HepG2 (cell line): ENCODE measurements at regions of chr1 and their contacts with region 1.

Region 1: DNA sequence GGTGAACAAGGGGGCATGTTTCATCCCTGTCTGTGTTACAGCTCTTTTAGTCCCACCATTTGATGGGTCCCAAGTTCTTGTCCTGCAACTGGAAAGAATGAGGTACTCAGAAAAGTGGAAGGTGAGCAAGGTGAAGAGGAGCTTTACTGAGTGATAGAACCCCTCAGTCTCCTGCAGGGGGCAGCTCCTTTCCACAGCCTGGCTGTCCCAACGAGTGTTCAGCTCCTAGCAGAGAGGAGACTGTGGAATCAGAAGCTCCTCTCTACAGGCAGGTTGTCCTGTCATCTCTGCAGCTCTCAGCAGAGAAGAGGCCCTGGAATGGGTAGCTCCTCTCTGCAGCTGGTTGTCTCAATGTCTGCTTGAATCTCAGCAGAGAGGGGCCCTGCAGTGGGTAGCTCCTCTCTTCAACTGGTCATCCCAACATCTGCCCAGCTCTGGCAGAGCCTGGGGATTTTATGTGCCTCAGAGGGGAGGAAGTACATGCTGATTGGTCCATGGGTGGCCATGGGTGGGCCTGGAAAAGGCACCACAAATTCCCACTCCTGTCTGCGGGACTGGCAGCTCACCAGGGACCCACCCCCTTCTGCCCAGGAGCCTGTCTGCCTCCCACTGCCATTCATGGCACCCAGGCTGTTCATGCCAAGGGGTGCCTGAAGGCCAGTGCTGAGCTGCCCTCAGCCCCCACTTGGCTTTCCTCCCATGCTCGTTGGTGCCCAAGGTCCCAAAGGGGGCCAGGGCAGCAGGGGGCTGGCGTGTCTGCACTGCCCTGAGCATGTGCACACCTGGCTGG is 25.7 kb downstream of the LDLRAD1 start:
- DNase-seq: peak; percentile 75
- ATAC-seq: peak; percentile 100
- H3K4me3 ChIP-seq: no peak overlapping the region; a peak in 1 of 6 replicates
- H3K27ac ChIP-seq: no peak overlapping the region
- H3K4me1 ChIP-seq: no peaks in the 10 kb centered on the region
- H3K27me3 ChIP-seq: no peaks in the 10 kb centered on the region
- CTCF ChIP-seq: peak; percentile 93
- EP300 ChIP-seq: no peak
- POLR2A ChIP-seq: no peak
- RAD21 ChIP-seq: peak; percentile 87

Region 2: DNA sequence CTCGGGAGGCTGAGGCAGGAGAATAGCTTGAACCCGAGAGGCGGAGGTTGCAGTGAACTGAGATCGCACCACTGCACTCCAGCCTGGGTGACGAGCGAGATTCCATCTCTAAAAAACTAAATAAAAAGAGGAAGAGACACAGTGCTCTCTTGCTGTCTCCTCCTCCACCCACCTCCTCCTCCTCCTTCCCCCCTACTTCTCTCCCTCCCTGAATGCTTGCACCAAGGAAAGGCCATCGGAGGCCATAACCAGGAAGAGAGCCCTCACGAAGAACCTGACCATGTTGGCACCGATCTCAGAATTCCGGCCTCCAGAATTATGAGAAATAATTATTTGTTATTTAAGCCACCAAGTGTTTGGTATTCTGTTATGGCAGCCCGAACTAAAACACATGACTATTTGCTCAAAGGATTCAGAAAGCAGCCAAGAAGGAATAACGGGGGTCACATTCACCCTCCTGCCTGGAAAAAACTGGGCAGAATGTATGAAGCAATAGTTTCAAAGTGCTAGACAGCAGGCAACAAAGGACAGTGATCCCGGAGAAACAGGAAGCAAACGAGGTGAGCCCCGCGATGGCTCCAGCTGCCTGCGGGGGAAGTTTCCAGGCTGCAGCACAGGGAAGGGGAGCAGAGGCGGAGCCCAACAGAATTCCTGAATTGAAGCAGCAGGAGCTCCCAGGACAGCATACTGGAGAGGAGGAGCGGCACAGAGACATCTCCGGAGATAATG is 10.1 kb before region 1 on chr1:
- CTCF ChIA-PET with region 1: no interaction called
- POLR2A ChIA-PET with region 1: interaction called, 12 read pairs
- in situ Hi-C with region 1: no loop called
- intact Hi-C with region 1: no loop called
- DNase-seq: peak; percentile 79
- ATAC-seq: peak; percentile 90
- H3K4me3 ChIP-seq: peak overlapping the region; percentile 48 to 67 (median 58)
- H3K27ac ChIP-seq: peak overlapping the region; percentile 66
- H3K4me1 ChIP-seq: peaks cover 47% of the 10 kb centered on the region
- H3K27me3 ChIP-seq: no peaks in the 10 kb centered on the region
- CTCF ChIP-seq: no peak; the same call in 1 of the 2 replicates
- EP300 ChIP-seq: 0 out of 4 replicates have a peak, but pooled peaks of 1 of the 2 experiments have one; percentile 14
- POLR2A ChIP-seq: peak; percentile 57 to 73; a peak in 3 of 4 replicates
- RAD21 ChIP-seq: no peak

Region 3: GRCh38 chr1:54028306-54029251 is 36.3 kb after region 1 on chr1:
- CTCF ChIA-PET with region 1: no interaction called
- POLR2A ChIA-PET with region 1: no interaction called
- in situ Hi-C with region 1: no loop called
- intact Hi-C with region 1: loop called (anchors 5 kb)
- DNase-seq: peak; percentile 80
- ATAC-seq: peak; percentile 83
- H3K4me3 ChIP-seq: peak overlapping the region; percentile 4 to 43 (median 23)
- H3K27ac ChIP-seq: peak overlapping the region; percentile 62
- H3K4me1 ChIP-seq: peaks cover 38% of the 10 kb centered on the region
- H3K27me3 ChIP-seq: no peaks in the 10 kb centered on the region
- CTCF ChIP-seq: no peak
- EP300 ChIP-seq: peak in 1 of 2 experiments; percentile 6; a peak in 1 of 4 replicates
- POLR2A ChIP-seq: no peak
- RAD21 ChIP-seq: no peak

Region 4: GRCh38 chr1:54081306-54082270 is 89.3 kb after region 1 on chr1:
- CTCF ChIA-PET with region 1: interaction called, 12 read pairs
- POLR2A ChIA-PET with region 1: interaction called, 10 read pairs
- in situ Hi-C with region 1: no loop called
- intact Hi-C with region 1: loop called (anchors 1 kb)
- DNase-seq: peak; percentile 87
- ATAC-seq: peak; percentile 98
- H3K4me3 ChIP-seq: no peak overlapping the region
- H3K27ac ChIP-seq: peak overlapping the region; percentile 61
- H3K4me1 ChIP-seq: peaks cover 53% of the 10 kb centered on the region
- H3K27me3 ChIP-seq: no peaks in the 10 kb centered on the region
- CTCF ChIP-seq: peak; percentile 95
- EP300 ChIP-seq: no peak
- POLR2A ChIP-seq: no peak
- RAD21 ChIP-seq: peak; percentile 88